Activated CD4-positive, alpha-beta T cell treated with anti-CD3 and anti-CD28 coated beads for 36 hours (primary cell): ENCODE measurements at regions of chr6 and their contacts with region 1.

Region 1: GRCh38 chr6:69796642-69797390 is at the start of gene LMBRD1:
- DNase-seq: peak; percentile 99
- ATAC-seq: peak; percentile 94
- H3K4me3 Mint-ChIP-seq: peak within 1 kb of the TSS; percentile 94
- H3K27ac Mint-ChIP-seq: peak within 1 kb of the TSS; percentile 96
- H3K4me1 Mint-ChIP-seq: peaks cover 44% of the 10 kb centered on the region
- H3K27me3 Mint-ChIP-seq: no peaks in the 10 kb centered on the region
- total RNA-seq, gene LMBRD1: 16.7 to 18.4 TPM

Region 2: GRCh38 chr6:68533339-68533795 is 1263.4 kb before region 1 on chr6:
- CTCF ChIA-PET with region 1: no interaction called
- POLR2A ChIA-PET with region 1: no interaction called
- intact Hi-C with region 1: no loop called
- DNase-seq: no peak
- ATAC-seq: no peak
- H3K4me3 Mint-ChIP-seq: no peak overlapping the region
- H3K27ac Mint-ChIP-seq: no peak overlapping the region
- H3K4me1 Mint-ChIP-seq: no peaks in the 10 kb centered on the region
- H3K27me3 Mint-ChIP-seq: no peaks in the 10 kb centered on the region

Region 3: DNA sequence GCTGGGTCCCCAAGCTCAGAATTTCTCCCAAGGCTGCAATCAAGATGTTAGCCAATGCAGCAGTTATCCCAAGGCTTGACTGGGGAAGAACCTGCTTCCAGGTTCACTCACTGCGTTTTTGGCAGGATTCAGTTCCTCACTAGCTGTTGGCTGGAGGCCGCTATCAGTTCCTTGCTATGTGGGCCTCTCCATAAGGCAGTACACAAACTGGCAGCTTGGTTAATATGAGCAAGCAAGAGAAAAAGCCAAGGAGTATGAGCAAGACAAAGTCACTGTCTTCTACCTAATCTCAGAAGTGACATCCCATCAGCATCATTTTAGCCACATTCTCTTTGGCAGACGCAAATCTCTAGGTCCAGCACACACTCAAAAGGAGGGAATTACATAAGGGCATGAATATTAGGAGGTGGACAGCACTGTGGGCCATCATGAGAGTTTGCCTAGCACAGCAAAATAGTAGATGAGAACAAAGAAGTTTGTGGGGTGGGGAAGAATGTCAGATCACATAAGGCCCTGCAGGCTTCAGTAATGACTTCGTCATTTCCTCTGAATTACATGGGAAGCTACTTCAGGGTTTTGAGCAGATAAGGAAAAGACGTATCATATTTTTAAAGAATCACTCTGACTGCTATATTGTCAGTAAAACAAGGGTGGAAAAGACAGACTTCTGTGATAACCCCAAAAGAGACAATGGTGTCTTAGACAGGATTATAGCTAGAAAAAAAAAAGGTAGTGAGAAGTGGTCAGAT is 25.5 kb before region 1 on chr6:
- CTCF ChIA-PET with region 1: interaction called, 10 read pairs
- POLR2A ChIA-PET with region 1: interaction called, 4 read pairs
- intact Hi-C with region 1: loop called in 1 of 2 experiments (anchors 1 kb)
- DNase-seq: peak; percentile 11
- ATAC-seq: peak; percentile 86
- H3K4me3 Mint-ChIP-seq: no peak overlapping the region
- H3K27ac Mint-ChIP-seq: peak overlapping the region; percentile 75
- H3K4me1 Mint-ChIP-seq: peaks cover 48% of the 10 kb centered on the region
- H3K27me3 Mint-ChIP-seq: no peaks in the 10 kb centered on the region

Region 4: DNA sequence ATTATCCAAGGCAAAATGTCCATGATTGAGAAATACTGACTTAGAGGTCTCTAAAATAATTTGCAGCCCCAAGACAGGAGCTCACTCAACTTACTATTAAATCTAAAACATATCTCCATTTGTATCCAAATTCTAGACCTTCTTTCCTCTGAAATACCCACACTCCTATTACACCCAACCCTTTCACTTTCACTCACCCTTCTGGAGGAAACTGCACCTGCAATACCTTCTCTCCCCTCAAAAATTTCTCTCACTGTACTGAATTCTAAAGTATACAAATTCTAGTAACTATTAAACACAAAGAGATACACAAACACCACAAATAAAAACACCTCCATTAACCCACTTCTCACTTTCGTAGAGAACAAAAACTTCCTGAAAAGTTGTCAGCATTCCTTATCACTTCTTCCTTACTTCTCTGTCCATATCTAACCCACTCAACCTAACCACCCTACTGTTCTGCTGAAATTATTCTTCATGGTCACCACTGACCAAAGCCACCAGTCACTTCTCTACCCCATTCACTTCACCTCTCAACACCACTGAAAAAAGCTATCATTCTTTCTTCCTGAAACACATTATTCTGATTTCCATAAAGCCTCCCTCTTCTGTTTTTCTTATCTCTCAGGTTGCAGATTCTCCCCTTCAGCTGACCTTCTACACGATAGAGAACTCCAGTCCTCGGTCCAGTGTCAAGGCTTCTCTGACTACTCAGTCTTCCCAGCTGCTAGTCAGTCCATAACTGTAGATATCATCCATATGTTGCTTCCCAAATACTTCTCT is 12.0 kb before region 1 on chr6:
- CTCF ChIA-PET with region 1: interaction called, 16 read pairs
- POLR2A ChIA-PET with region 1: interaction called, 6 read pairs
- intact Hi-C with region 1: no loop called
- DNase-seq: no peak
- ATAC-seq: peak; percentile 57
- H3K4me3 Mint-ChIP-seq: no peak overlapping the region
- H3K27ac Mint-ChIP-seq: peak overlapping the region; percentile 10
- H3K4me1 Mint-ChIP-seq: peaks cover 52% of the 10 kb centered on the region
- H3K27me3 Mint-ChIP-seq: no peaks in the 10 kb centered on the region

Region 5: GRCh38 chr6:69813508-69813907 is 16.7 kb after region 1 on chr6:
- CTCF ChIA-PET with region 1: interaction called, 23 read pairs
- POLR2A ChIA-PET with region 1: interaction called, 3 read pairs
- intact Hi-C with region 1: loop called (anchors 1 kb)
- DNase-seq: no peak
- ATAC-seq: peak; percentile 75
- H3K4me3 Mint-ChIP-seq: peak overlapping the region; percentile 13
- H3K27ac Mint-ChIP-seq: peak overlapping the region; percentile 82
- H3K4me1 Mint-ChIP-seq: peaks cover 51% of the 10 kb centered on the region
- H3K27me3 Mint-ChIP-seq: no peaks in the 10 kb centered on the region

Region 6: DNA sequence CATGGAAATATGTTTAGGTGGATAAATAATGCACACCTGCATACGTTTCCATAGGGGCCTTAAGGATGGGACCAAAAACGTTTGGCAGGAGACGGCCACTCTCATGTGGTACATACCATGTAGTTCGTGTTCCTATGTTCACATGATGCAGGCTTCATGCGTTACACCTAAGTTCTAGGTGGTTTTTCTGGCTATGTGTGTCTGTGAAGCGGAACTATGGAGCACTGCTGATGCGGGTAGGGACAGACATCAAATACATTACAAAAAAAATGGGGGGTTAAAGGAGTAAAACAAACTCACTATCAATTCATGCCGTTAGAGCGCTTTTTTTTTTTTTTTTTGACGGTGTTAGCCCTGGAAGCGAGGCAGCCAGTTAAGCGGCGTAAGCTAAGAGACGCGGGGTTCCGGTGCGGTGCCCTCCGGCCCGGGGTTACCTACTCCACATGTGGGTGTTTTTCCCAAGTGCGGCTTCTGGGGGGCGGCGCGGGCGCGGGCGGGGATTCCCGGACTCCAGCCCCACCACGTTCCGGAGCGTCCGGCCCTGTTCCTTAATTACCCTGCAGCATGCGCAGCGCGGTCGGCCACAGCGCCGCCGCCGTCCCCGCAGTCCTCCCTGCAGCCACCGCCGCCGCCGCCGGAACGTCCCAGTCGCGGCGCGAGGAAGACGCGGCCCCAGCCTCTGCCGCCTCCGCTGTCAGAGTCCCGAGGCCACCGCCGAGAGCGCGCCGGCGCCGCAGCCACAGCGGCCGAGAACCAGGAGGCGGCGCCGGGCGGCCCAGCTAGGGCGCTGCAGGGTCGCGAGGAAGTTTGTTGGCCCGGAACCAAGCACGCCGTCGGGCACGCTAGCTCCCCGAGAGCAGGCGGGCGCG is 70.2 kb after region 1 on chr6:
- CTCF ChIA-PET with region 1: interaction called, 3 read pairs
- POLR2A ChIA-PET with region 1: no interaction called
- intact Hi-C with region 1: loop called (anchors 1 to 5 kb)
- DNase-seq: peak; percentile 74
- ATAC-seq: peak; percentile 81
- H3K4me3 Mint-ChIP-seq: peak overlapping the region; percentile 64
- H3K27ac Mint-ChIP-seq: peak overlapping the region; percentile 65
- H3K4me1 Mint-ChIP-seq: peaks cover 23% of the 10 kb centered on the region
- H3K27me3 Mint-ChIP-seq: peaks cover 46% of the 10 kb centered on the region

Region 7: DNA sequence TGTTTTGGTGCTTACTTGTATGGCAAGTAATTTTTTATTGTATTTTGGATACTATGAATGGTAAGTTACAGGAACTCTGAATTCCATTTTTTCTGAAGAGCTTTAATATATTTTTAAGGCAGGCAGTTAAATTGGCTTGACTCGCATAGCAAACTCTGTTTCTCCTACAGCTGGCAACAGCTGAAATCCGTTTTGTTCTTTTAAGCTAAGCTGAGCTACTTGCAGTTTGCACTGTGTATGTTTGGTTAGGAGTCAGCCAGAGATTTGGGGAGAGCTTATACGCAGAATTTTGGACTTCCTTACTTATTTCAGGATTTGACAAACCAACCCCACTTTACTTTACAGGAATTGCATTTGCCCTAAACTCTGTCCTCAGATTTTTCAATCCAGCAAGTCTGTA is 248.6 kb after region 1 on chr6:
- CTCF ChIA-PET with region 1: no interaction called
- POLR2A ChIA-PET with region 1: no interaction called
- intact Hi-C with region 1: no loop called
- DNase-seq: no peak
- ATAC-seq: no peak
- H3K4me3 Mint-ChIP-seq: no peak overlapping the region
- H3K27ac Mint-ChIP-seq: no peak overlapping the region
- H3K4me1 Mint-ChIP-seq: no peaks in the 10 kb centered on the region
- H3K27me3 Mint-ChIP-seq: peaks cover 2% of the 10 kb centered on the region

Region 8: GRCh38 chr6:70413114-70413991 is 616.5 kb after region 1 on chr6 and contains the start of gene FAM135A:
- CTCF ChIA-PET with region 1: no interaction called
- POLR2A ChIA-PET with region 1: no interaction called
- intact Hi-C with region 1: loop called in 1 of 2 experiments (anchors 1 kb)
- DNase-seq: peak; percentile 99
- ATAC-seq: peak; percentile 95
- H3K4me3 Mint-ChIP-seq: peak within 1 kb of the TSS; percentile 82
- H3K27ac Mint-ChIP-seq: peak within 1 kb of the TSS; percentile 89
- H3K4me1 Mint-ChIP-seq: peaks cover 26% of the 10 kb centered on the region
- H3K27me3 Mint-ChIP-seq: peaks cover 2% of the 10 kb centered on the region
- total RNA-seq, gene FAM135A: 7.6 to 7.8 TPM

Region 9: DNA sequence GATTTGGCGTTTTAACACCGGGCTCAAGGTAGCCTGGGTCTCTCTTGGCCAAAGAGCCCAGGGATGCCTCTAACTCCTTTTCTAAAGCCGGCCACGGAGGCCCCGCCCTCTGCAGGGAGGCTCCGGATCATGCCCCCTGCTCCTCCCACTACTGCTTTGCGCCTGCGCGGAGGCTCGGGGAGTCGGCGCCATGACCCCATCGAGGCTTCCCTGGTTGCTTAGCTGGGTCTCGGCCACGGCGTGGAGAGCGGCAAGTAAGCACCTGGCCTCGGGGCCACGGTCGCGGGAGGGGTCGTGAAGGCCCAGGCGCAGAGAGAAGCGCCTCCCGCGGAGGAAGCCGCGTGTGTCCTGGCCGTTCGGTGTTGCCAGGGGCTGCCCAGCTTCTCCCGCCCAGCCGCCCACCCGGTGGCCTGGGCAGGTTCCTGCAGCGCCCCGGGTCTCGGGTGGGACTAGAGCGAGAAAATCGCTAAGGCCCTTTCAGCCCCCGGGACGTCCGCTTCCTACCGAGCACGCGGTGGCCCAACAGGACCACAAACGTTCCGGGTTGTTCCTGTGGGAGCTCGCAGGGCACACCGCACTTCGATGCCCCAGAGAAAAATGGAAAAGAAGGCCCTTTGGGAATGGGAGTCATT is 770.1 kb after region 1 on chr6 and contains the start of gene SDHAF4:
- CTCF ChIA-PET with region 1: no interaction called
- POLR2A ChIA-PET with region 1: no interaction called
- intact Hi-C with region 1: loop called in 1 of 2 experiments (anchors 5 kb)
- DNase-seq: peak; percentile 96
- ATAC-seq: peak; percentile 100
- H3K4me3 Mint-ChIP-seq: peak within 1 kb of the TSS; percentile 78
- H3K27ac Mint-ChIP-seq: peak within 1 kb of the TSS; percentile 82
- H3K4me1 Mint-ChIP-seq: peaks cover 16% of the 10 kb centered on the region
- H3K27me3 Mint-ChIP-seq: no peaks in the 10 kb centered on the region
- total RNA-seq, gene SDHAF4: 15.8 to 17.6 TPM